Psoas muscle (tissue), 8 donors: ENCODE measurements at regions of chr2 and their contacts with region 1.

Region 1: GRCh38 chr2:86238354-86238753 is 39.1 kb downstream of the MRPL35 start:
- DNase-seq: no peak
- ATAC-seq: no peak
- H3K4me3 ChIP-seq: no peak overlapping the region
- H3K27ac ChIP-seq: no peak overlapping the region
- H3K4me1 ChIP-seq: no peaks in the 10 kb centered on the region
- H3K27me3 ChIP-seq: no peaks in the 10 kb centered on the region
- CTCF ChIP-seq: no peak

Region 2: GRCh38 chr2:86221066-86221684 is 17.2 kb before region 1 on chr2:
- intact Hi-C with region 1: no loop called
- DNase-seq: peak in 1 of 2 donors; percentile 42
- ATAC-seq: peak; percentile 31 to 59 (median 44)
- H3K4me3 ChIP-seq: no peak overlapping the region
- H3K27ac ChIP-seq: no peak overlapping the region
- H3K4me1 ChIP-seq: peaks cover 43% of the 10 kb centered on the region
- H3K27me3 ChIP-seq: no peaks in the 10 kb centered on the region
- CTCF ChIP-seq: peak; percentile 93

Region 3: DNA sequence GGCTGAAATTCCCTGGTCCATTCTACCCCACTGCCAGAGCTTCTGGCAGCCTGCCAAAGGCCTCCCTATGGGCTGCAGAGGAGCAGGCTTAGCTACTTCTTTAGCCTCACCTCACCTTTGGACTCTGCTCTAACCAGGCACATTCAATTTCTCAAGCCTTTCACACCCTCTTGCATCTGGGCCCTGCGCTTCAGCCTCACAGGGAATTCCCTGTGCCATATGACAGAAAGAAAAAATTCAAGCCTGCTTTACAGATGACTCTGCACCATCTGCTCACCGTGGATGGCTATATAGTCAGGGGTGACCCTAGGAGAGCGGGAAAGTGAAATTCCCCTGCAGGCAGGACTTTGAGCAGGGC is 36.5 kb after region 1 on chr2:
- intact Hi-C with region 1: loop called in 1 of 2 experiments (anchors 5 kb)
- DNase-seq: no peak
- ATAC-seq: peak; percentile 48 to 73 (median 64)
- H3K4me3 ChIP-seq: no peak overlapping the region
- H3K27ac ChIP-seq: peak overlapping the region; percentile 70
- H3K4me1 ChIP-seq: peaks cover 27% of the 10 kb centered on the region
- H3K27me3 ChIP-seq: no peaks in the 10 kb centered on the region
- CTCF ChIP-seq: no peak